ENCODE measurements at regions of chr15 and their contacts with region 1.

Region 1: DNA sequence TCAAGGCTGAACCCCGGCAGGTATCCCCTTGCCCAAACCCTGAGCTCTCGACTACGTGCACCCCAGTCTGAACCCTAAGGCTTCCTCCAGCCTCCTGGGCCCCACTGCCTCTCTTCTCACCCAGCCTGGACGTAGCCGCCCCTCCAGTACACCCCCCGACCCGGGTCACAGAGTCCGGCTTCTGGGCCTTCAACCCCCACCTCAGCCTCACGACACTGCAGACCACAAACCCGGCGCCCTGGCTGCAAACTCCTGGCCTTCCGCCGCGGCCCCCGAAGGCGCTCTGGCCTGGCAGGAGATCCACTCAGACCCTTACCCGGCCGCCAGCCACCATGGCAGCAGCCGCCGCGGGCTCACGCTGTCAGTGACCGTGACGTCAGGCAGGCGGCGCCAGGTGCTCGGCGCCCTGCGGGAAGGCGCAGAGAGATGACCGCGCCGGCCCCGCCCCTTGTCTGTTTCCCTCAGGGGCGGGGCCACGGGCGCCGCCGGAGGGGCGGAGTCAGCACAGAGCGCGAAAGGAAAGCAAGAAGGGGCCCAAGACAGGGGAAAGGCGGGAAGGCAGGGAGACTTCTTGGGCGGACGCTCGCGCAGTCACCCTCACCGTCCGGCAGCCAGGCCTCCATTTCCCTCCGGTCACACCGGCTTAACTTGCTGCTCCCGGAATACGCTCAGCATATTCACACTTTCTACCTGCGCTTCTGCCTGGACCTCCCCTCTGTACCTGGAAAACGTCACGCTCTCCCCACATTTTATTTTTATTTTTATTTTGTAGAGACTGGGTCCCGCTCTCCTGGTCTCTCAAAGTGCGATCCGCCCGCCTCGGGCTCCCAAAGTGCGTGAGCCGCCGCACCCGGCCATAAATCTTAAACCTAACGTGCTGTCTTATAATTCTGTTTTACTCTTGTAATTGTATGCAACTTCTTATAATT is at the start of gene RMDN3:
- DNase-seq: peak; percentile 95 to 97
- ATAC-seq: peak; percentile 88 to 96 (median 90)
- H3K4me3 ChIP-seq: peak within 1 kb of the TSS; percentile 97
- H3K4me3 Mint-ChIP-seq: peak within 1 kb of the TSS; percentile 99
- H3K27ac ChIP-seq: peak within 1 kb of the TSS; percentile 90
- H3K27ac Mint-ChIP-seq: peak within 1 kb of the TSS; percentile 98
- H3K4me1 ChIP-seq: peaks cover 43% of the 10 kb centered on the region
- H3K4me1 Mint-ChIP-seq: peaks cover 39 to 46% of the 10 kb centered on the region in 2 donors
- H3K27me3 ChIP-seq: no peaks in the 10 kb centered on the region
- H3K27me3 Mint-ChIP-seq: no peaks in the 10 kb centered on the region
- CTCF ChIP-seq: no peak
- total RNA-seq, gene RMDN3: 52.8 to 82.3 (median 72.0) TPM

Region 2: GRCh38 chr15:40564591-40565332 is 190.4 kb before region 1 on chr15 and contains the start of gene CCDC32:
- intact Hi-C with region 1: loop called (anchors 1 kb)
- DNase-seq: peak; percentile 87 to 98
- ATAC-seq: peak; percentile 88 to 97 (median 92)
- H3K4me3 ChIP-seq: peak within 1 kb of the TSS; percentile 92
- H3K4me3 Mint-ChIP-seq: peak within 1 kb of the TSS; percentile 95
- H3K27ac ChIP-seq: peak within 1 kb of the TSS; percentile 92
- H3K27ac Mint-ChIP-seq: peak within 1 kb of the TSS; percentile 94 to 95
- H3K4me1 ChIP-seq: peaks cover 19% of the 10 kb centered on the region
- H3K4me1 Mint-ChIP-seq: peaks cover 34 to 43% of the 10 kb centered on the region in 2 donors
- H3K27me3 ChIP-seq: no peaks in the 10 kb centered on the region
- H3K27me3 Mint-ChIP-seq: no peaks in the 10 kb centered on the region
- CTCF ChIP-seq: no peak
- total RNA-seq, gene CCDC32: 34.2 to 43.7 (median 37.4) TPM

Region 3: GRCh38 chr15:40694688-40695468 is 60.3 kb before region 1 on chr15 and contains the start of gene RAD51:
- intact Hi-C with region 1: loop called (anchors 1 kb)
- DNase-seq: peak; percentile 88 to 96
- ATAC-seq: peak; percentile 91 to 98 (median 92)
- H3K4me3 ChIP-seq: peak within 1 kb of the TSS; percentile 92
- H3K4me3 Mint-ChIP-seq: peak within 1 kb of the TSS; percentile 100
- H3K27ac ChIP-seq: peak within 1 kb of the TSS; percentile 97
- H3K27ac Mint-ChIP-seq: peak within 1 kb of the TSS; percentile 97 to 98
- H3K4me1 ChIP-seq: peaks cover 19% of the 10 kb centered on the region
- H3K4me1 Mint-ChIP-seq: peaks cover 20 to 23% of the 10 kb centered on the region in 2 donors
- H3K27me3 ChIP-seq: no peaks in the 10 kb centered on the region
- H3K27me3 Mint-ChIP-seq: no peaks in the 10 kb centered on the region
- CTCF ChIP-seq: no peak
- total RNA-seq, gene RAD51: 1.2 to 5.0 (median 4.0) TPM

Region 4: DNA sequence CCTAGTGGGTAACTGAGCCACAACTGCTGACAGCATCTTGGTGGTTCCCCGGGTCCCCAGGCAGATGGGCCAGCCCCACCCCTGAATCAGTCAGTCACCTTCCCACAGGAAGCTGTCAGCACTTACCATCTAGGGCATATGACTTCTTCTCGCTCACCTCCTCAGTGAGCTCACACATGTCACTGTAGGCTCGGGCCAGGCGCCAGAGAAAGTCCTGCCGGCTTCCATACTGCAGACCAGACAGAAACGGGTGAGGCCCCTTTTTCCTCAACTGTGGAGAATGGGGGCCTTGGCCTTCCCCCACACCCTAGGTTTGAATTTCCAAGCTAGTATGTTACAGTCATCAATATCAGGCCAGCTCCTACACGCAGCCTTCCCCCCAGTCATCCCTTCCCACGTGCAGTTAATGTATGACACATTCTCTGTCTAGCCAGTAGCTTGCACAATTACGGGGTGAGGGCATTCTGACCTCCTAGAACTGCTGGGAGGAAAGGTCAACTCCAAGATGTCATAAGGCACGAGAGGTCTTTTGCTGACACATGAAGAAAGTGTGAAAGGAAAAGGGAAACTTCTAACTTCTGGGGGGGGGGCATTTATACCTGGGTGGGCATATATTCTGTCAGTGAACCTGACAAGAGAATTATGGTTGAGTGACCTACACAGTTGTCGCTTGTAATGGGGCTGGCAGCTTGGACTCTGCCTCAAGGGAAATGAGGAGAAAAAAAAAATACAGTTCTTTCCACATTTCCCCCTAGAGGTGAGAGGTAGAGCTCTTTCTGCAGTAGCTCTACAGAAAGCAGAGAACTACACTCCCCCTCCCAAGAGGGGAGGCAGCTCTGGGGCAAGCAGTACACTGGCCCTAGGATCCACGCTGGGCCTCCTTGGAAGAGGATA is 11.0 kb before region 1 on chr15:
- intact Hi-C with region 1: loop called (anchors 1 kb)
- DNase-seq: peak; percentile 70 to 88
- ATAC-seq: peak; percentile 83 to 94 (median 90)
- H3K4me3 ChIP-seq: no peak overlapping the region
- H3K4me3 Mint-ChIP-seq: peak overlapping the region; percentile 80
- H3K27ac ChIP-seq: peak overlapping the region; percentile 75
- H3K27ac Mint-ChIP-seq: peak overlapping the region; percentile 94 to 96
- H3K4me1 ChIP-seq: peaks cover 55% of the 10 kb centered on the region
- H3K4me1 Mint-ChIP-seq: peaks cover 55 to 58% of the 10 kb centered on the region in 2 donors
- H3K27me3 ChIP-seq: no peaks in the 10 kb centered on the region
- H3K27me3 Mint-ChIP-seq: no peaks in the 10 kb centered on the region
- CTCF ChIP-seq: no peak

Region 5: DNA sequence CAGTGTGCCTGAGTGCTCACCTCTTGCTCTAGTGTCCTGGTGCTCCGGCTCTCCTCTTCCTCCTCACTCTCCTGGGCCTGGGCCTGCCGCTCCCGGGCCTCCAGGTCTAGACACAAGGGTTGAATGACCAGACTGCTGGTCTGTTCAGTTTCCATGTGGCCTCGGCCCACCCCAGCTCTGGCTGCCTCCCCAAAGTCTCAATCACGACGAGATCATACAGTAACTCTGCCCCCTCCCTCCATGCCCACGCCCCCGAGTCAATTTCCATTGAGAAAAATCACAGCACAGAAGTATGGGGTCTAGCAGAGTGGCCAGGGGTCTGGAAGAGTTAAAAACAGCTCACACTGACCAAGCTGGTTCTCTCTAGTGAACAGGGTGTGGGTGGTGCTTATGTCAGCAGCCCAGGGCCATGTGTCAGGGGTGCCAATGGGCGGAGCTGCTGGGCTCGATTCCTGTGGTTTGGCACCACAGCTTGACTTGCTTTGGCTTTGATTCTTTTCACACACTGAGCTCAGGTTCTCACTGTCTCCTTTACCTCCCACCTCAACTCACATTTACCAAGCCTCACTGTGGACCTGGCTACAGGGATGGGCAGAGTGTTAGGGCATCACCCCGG is 21.5 kb after region 1 on chr15:
- intact Hi-C with region 1: loop called (anchors 1 kb)
- DNase-seq: peak; percentile 74 to 79
- ATAC-seq: peak; percentile 97 to 99 (median 98)
- H3K4me3 ChIP-seq: no peak overlapping the region
- H3K4me3 Mint-ChIP-seq: peak overlapping the region; percentile 82
- H3K27ac ChIP-seq: peak overlapping the region; percentile 62
- H3K27ac Mint-ChIP-seq: peak overlapping the region; percentile 86 to 97
- H3K4me1 ChIP-seq: peaks cover 42% of the 10 kb centered on the region
- H3K4me1 Mint-ChIP-seq: peaks cover 23 to 33% of the 10 kb centered on the region in 2 donors
- H3K27me3 ChIP-seq: no peaks in the 10 kb centered on the region
- H3K27me3 Mint-ChIP-seq: no peaks in the 10 kb centered on the region
- CTCF ChIP-seq: no peak

Region 6: GRCh38 chr15:40807028-40807887 is 52.1 kb after region 1 on chr15 and contains the starts of genes DNAJC17 and ZFYVE19:
- intact Hi-C with region 1: loop called (anchors 2 kb)
- DNase-seq: peak; percentile 88 to 97
- ATAC-seq: peak; percentile 96 to 100 (median 98)
- H3K4me3 ChIP-seq: peak within 1 kb of the TSS; percentile 99
- H3K4me3 Mint-ChIP-seq: peak within 1 kb of the TSS; percentile 100
- H3K27ac ChIP-seq: peak within 1 kb of the TSS; percentile 95
- H3K27ac Mint-ChIP-seq: peak within 1 kb of the TSS; percentile 97 to 98
- H3K4me1 ChIP-seq: peaks cover 20% of the 10 kb centered on the region
- H3K4me1 Mint-ChIP-seq: peaks cover 19 to 21% of the 10 kb centered on the region in 2 donors
- H3K27me3 ChIP-seq: no peaks in the 10 kb centered on the region
- H3K27me3 Mint-ChIP-seq: no peaks in the 10 kb centered on the region
- CTCF ChIP-seq: no peak
- total RNA-seq, gene DNAJC17: 36.2 to 64.9 (median 50.0) TPM
- total RNA-seq, gene ZFYVE19: 16.4 to 19.7 (median 18.5) TPM

Region 7: DNA sequence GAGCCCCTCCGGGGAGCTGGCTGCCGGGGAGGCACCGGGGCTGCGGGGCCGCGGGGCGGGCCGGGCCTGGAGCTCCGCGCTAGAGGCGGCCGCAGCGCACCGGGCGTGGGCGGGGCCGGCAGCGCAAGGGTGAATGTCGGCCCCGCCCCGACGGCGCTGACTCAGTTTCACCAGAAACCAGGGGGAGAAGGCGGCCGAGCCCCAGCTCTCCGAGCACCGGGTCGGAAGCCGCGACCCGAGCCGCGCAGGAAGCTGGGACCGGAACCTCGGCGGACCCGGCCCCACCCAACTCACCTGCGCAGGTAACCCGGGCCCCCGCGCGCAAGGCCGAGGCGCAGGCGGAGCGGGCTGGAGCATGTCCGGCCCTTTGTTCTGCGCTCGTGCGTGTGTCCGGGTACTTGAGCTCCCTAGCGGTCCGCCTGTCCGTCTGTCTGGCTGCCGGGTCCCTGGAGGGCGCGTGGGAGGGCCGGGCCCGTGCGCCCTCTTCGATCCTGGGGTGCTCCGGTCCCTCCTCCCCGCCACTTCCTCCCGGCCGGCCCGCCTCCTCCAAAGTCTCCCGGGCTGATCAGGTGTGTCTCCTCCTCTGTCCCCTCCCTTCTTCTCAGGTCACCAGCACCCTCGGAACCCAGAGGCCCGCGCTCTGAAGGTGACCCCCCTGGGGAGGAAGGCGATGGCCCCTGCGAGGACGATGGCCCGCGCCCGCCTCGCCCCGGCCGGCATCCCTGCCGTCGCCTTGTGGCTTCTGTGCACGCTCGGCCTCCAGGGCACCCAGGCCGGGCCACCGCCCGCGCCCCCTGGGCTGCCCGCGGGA is 88.9 kb after region 1 on chr15 and contains the start of gene SPINT1:
- intact Hi-C with region 1: no loop called
- DNase-seq: peak in 1 of 2 donors; percentile 32
- ATAC-seq: peak; percentile 44 to 59 (median 57)
- H3K4me3 ChIP-seq: peak within 1 kb of the TSS; percentile 36
- H3K4me3 Mint-ChIP-seq: peak within 1 kb of the TSS; percentile 83
- H3K27ac ChIP-seq: no peak within 1 kb of the TSS
- H3K27ac Mint-ChIP-seq: no peak within 1 kb of the TSS
- H3K4me1 ChIP-seq: peaks cover 34% of the 10 kb centered on the region
- H3K4me1 Mint-ChIP-seq: peaks cover 6% of the 10 kb centered on the region in 2 donors
- H3K27me3 ChIP-seq: peaks cover 12% of the 10 kb centered on the region
- H3K27me3 Mint-ChIP-seq: peaks cover 20 to 24% of the 10 kb centered on the region in 2 donors
- CTCF ChIP-seq: no peak
- total RNA-seq, gene SPINT1: 0.41 to 3.1 (median 1.7) TPM

Region 8: GRCh38 chr15:40906091-40906990 is 151.2 kb after region 1 on chr15:
- intact Hi-C with region 1: no loop called
- DNase-seq: peak; percentile 68 to 83
- ATAC-seq: peak; percentile 55 to 67 (median 62)
- H3K4me3 ChIP-seq: peak overlapping the region; percentile 52
- H3K4me3 Mint-ChIP-seq: peak overlapping the region; percentile 85
- H3K27ac ChIP-seq: peak overlapping the region; percentile 84
- H3K27ac Mint-ChIP-seq: peak overlapping the region in 1 of 2 donors; percentile 91
- H3K4me1 ChIP-seq: peaks cover 42% of the 10 kb centered on the region
- H3K4me1 Mint-ChIP-seq: peaks cover 19 to 51% of the 10 kb centered on the region in 2 donors
- H3K27me3 ChIP-seq: no peaks in the 10 kb centered on the region
- H3K27me3 Mint-ChIP-seq: no peaks in the 10 kb centered on the region
- CTCF ChIP-seq: peak; percentile 83

Region 9: GRCh38 chr15:41125931-41126642 is 370.9 kb after region 1 on chr15:
- intact Hi-C with region 1: no loop called
- DNase-seq: no peak
- ATAC-seq: no peak
- H3K4me3 ChIP-seq: no peak overlapping the region
- H3K4me3 Mint-ChIP-seq: no peak overlapping the region
- H3K27ac ChIP-seq: no peak overlapping the region
- H3K27ac Mint-ChIP-seq: no peak overlapping the region
- H3K4me1 ChIP-seq: no peaks in the 10 kb centered on the region
- H3K4me1 Mint-ChIP-seq: no peaks in the 10 kb centered on the region
- H3K27me3 ChIP-seq: no peaks in the 10 kb centered on the region
- H3K27me3 Mint-ChIP-seq: peaks cover 8 to 17% of the 10 kb centered on the region in 2 donors
- CTCF ChIP-seq: no peak